A673 (cell line): ENCODE measurements at regions of chr3 and their contacts with region 1.

Region 1: GRCh38 chr3:132034486-132035464 is at the start of gene CPNE4:
- DNase-seq: peak; percentile 94
- H3K4me3 ChIP-seq: peak within 1 kb of the TSS; percentile 55
- H3K27ac ChIP-seq: no peak within 1 kb of the TSS
- H3K4me1 ChIP-seq: peaks cover 5% of the 10 kb centered on the region
- H3K27me3 ChIP-seq: peaks cover 4% of the 10 kb centered on the region
- CTCF ChIP-seq: peak; percentile 95
- total RNA-seq, gene CPNE4: 2.9 and 5.7 TPM in 2 replicates

Region 2: GRCh38 chr3:131231710-131232389 is 802.9 kb before region 1 on chr3:
- CTCF ChIA-PET with region 1: no interaction called
- POLR2A ChIA-PET with region 1: no interaction called
- intact Hi-C with region 1: loop called (anchors 5 kb)
- DNase-seq: peak; percentile 80
- H3K4me3 ChIP-seq: no peak overlapping the region
- H3K27ac ChIP-seq: peak overlapping the region; percentile 70
- H3K4me1 ChIP-seq: peaks cover 28% of the 10 kb centered on the region
- H3K27me3 ChIP-seq: no peaks in the 10 kb centered on the region
- CTCF ChIP-seq: peak; percentile 41; the same call in 1 of the 2 replicates

Region 3: GRCh38 chr3:131303848-131304247 is 730.9 kb before region 1 on chr3:
- CTCF ChIA-PET with region 1: no interaction called
- POLR2A ChIA-PET with region 1: no interaction called
- intact Hi-C with region 1: no loop called
- DNase-seq: no peak
- H3K4me3 ChIP-seq: no peak overlapping the region
- H3K27ac ChIP-seq: no peak overlapping the region
- H3K4me1 ChIP-seq: no peaks in the 10 kb centered on the region
- H3K27me3 ChIP-seq: no peaks in the 10 kb centered on the region
- CTCF ChIP-seq: no peak

Region 4: DNA sequence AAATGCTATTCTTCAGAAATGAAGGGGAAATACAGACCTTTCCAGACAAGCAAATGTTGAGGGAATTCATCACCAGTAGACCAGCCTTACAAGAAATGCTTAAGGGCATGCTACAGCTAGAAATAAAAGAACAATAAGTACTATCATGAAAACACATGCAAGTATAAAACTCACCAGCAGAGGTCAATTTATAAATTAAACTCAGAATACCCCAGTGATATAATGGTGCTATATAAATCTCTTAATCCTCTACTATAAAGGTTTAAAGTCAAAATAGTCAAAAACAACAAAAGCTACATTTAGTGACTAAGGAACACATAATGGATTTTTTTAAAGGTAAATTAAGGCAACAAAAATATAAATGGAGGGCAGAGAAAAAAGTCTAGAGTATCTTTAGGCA is 142.4 kb before region 1 on chr3:
- CTCF ChIA-PET with region 1: no interaction called
- POLR2A ChIA-PET with region 1: no interaction called
- intact Hi-C with region 1: no loop called
- DNase-seq: no peak
- H3K4me3 ChIP-seq: no peak overlapping the region
- H3K27ac ChIP-seq: no peak overlapping the region
- H3K4me1 ChIP-seq: peaks cover under 1% of the 10 kb centered on the region
- H3K27me3 ChIP-seq: no peaks in the 10 kb centered on the region
- CTCF ChIP-seq: no peak; the same call in 1 of the 2 replicates

Region 5: DNA sequence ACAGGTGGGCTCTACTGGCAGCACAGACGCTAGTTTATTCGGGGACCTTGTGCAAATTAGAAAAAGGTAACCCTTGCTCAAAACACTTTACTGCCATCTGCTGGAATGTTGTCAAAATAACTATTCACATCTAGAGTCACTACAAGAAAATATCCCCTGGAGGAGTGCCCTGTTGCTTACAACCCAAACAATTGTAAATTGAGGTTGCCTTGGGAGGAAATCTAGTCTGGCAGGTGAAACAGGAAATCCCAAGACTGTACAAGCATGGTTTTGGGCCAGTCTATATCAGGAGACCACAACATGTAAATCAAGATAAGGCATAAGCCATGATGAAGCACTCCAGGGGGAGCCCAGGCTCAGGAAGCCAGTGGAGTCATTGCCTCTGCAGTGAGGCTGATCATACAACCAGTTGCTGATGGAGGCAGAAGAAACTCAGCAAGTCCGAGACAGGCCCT is 145.6 kb after region 1 on chr3:
- CTCF ChIA-PET with region 1: interaction called, 11 read pairs
- POLR2A ChIA-PET with region 1: no interaction called
- intact Hi-C with region 1: loop called (anchors 1 kb)
- DNase-seq: peak; percentile 82
- H3K4me3 ChIP-seq: no peak overlapping the region
- H3K27ac ChIP-seq: no peak overlapping the region
- H3K4me1 ChIP-seq: no peaks in the 10 kb centered on the region
- H3K27me3 ChIP-seq: peaks cover 2% of the 10 kb centered on the region
- CTCF ChIP-seq: peak; percentile 71

Region 6: DNA sequence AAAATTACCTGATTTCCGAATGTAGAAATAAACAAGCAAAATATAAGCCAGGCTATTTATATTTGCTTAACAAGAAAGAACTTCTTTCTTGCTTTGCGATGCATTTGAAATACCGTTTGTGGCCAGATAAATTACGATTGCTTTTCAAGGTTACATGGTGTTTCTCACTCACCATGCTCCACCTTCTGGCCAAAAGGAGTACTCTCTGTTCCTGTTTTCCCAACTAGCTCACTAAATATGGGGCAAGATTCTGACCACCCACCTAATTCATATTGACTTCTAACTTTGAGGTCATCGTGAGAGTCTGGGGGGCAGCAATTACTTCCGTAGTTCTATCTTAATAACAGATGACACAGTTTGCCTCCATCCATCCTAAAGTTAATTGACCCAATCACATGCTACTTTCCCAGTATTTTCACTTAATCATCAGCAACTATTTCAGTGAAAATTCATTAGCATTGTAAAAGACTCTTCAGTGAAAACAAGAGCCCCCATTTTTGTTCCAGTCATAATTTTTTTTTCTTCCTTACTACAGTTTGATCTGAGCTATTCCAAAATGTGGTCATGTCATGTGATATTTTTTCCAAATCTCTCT is 308.3 kb after region 1 on chr3:
- CTCF ChIA-PET with region 1: no interaction called
- POLR2A ChIA-PET with region 1: no interaction called
- intact Hi-C with region 1: loop called (anchors 5 kb)
- DNase-seq: peak; percentile 75
- H3K4me3 ChIP-seq: no peak overlapping the region
- H3K27ac ChIP-seq: no peak overlapping the region
- H3K4me1 ChIP-seq: no peaks in the 10 kb centered on the region
- H3K27me3 ChIP-seq: no peaks in the 10 kb centered on the region
- CTCF ChIP-seq: peak; percentile 87